Caco-2 (cell line): ENCODE measurements at regions of chr1 and their contacts with region 1.

Region 1: GRCh38 chr1:245045087-245045881 is 109.5 kb upstream of the KIF26B start:
- DNase-seq: peak; percentile 88 to 94
- H3K4me3 ChIP-seq: peak overlapping the region; percentile 13; the same call in 1 of the 2 replicates
- H3K4me3 Mint-ChIP-seq: peak overlapping the region; percentile 47
- H3K27ac Mint-ChIP-seq: peak overlapping the region; percentile 39
- H3K4me1 ChIP-seq: peaks cover 54% of the 10 kb centered on the region
- H3K4me1 Mint-ChIP-seq: peaks cover 37% of the 10 kb centered on the region
- H3K27me3 ChIP-seq: no peaks in the 10 kb centered on the region
- H3K27me3 Mint-ChIP-seq: no peaks in the 10 kb centered on the region
- CTCF ChIP-seq: no peak

Region 2: DNA sequence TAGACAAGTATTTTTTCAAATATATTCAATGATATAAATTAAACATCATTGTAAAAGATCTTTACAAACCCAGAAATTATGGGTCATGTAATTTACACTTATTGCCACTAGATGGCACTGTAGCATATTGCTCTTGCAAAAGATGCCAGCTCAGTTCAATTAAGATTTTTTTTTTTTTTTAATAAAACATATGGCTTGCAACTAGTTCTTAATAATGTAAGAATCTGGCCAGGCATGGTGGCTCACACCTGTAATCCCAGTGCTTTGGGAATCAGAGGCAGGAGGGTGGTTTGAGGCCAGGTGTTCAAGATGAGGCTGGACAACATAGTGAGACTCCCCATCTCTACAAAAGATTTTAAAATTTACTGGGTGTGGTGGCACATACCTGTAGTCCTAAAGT is 441.8 kb before region 1 on chr1:
- CTCF ChIA-PET with region 1: interaction called, 4 read pairs
- POLR2A ChIA-PET with region 1: no interaction called
- intact Hi-C with region 1: loop called (anchors 2 kb)
- DNase-seq: peak in 1 of 2 experiments; percentile 26
- H3K4me3 ChIP-seq: no peak overlapping the region
- H3K4me3 Mint-ChIP-seq: no peak overlapping the region
- H3K27ac Mint-ChIP-seq: no peak overlapping the region
- H3K4me1 ChIP-seq: no peaks in the 10 kb centered on the region
- H3K4me1 Mint-ChIP-seq: no peaks in the 10 kb centered on the region
- H3K27me3 ChIP-seq: no peaks in the 10 kb centered on the region
- H3K27me3 Mint-ChIP-seq: no peaks in the 10 kb centered on the region
- CTCF ChIP-seq: peak; percentile 60 to 81

Region 3: DNA sequence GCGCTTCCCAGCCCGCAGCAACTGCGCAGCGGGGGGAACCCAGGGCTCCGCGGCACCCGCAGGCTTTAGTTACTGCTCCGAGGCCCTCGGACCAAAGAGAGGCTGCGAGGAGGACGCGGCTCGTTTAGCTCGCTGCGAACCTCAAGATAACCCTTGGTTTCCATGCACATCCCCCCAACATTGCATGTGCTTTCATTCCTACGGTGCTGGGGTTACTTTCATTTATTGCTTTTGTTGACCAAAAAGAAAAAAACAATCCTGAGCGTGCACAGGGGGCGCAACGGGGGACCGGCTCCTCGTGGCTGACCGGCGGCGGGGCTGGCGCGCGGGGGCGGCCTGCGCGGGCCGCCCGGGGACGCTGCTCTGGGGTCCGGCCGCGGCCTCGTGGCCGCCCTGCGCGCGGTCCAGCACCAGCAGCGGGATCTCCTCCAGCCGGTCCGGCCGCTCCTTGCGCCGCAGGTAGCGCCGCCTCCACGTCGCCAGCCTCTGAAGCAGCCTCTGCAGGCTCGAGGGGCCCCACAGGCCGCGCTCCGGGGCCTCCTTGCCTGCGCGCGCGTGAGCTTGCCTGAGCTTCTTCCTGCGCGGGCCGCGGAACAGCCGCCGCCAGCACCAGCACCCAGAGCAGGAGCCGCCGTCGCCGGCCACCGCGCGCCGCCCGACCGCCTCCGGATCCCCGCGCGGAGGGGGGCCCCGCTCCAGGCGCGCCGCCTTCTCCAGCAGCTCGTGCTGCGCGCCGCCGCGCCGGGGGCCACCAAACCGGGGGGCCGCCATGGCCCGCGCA is 314.9 kb before region 1 on chr1:
- CTCF ChIA-PET with region 1: no interaction called
- POLR2A ChIA-PET with region 1: no interaction called
- intact Hi-C with region 1: loop called (anchors 10 kb)
- DNase-seq: peak; percentile 67 to 78
- H3K4me3 ChIP-seq: peak overlapping the region; percentile 63
- H3K4me3 Mint-ChIP-seq: peak overlapping the region; percentile 83
- H3K27ac Mint-ChIP-seq: peak overlapping the region; percentile 86
- H3K4me1 ChIP-seq: peaks cover 13% of the 10 kb centered on the region
- H3K4me1 Mint-ChIP-seq: peaks cover 7% of the 10 kb centered on the region
- H3K27me3 ChIP-seq: no peaks in the 10 kb centered on the region
- H3K27me3 Mint-ChIP-seq: no peaks in the 10 kb centered on the region
- CTCF ChIP-seq: no peak

Region 4: DNA sequence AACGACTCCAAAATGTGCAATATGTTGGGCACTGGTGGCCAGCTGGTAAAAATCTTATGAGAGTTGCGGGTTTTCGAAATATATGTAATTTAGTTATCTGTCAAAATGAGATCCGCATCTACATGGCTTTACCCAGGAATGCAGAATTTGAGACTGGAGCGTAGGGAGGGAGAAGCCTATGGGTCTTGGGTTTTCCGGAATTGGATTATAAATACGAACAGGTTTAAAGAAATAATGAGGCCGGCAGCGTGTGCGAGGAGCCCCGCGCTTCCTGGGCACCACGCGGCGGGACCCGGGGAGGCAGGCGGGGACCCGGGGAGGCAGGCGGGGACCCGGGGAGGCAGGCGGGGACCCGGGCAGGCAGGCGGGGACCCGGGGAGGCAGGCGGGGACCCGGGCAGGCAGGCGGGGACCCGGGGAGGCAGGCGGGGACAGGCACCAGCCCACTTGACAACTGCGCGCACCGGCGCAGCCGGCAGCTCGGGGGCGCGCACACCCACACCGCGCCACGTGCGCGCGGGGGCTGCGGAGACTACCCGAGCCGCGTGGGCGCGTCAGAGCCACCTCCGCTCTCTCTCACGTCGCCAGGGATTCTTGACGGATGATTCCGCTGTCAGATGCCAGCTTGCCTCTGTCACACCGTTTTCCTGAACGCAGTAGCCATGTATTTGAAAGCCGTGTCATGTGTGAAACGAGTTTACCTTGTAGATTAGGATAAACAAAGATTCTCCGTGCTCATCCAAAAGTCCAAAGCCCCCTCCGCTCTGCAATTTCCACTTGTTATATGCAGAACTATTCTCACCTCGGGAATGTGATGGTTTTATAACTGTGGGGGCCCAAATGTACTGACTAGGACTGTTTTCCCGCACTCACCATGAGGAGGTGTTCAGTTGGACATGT is 126.6 kb before region 1 on chr1:
- CTCF ChIA-PET with region 1: no interaction called
- POLR2A ChIA-PET with region 1: no interaction called
- intact Hi-C with region 1: loop called (anchors 1 kb)
- DNase-seq: peak; percentile 45 to 64
- H3K4me3 ChIP-seq: peak overlapping the region; percentile 82
- H3K4me3 Mint-ChIP-seq: peak overlapping the region; percentile 84
- H3K27ac Mint-ChIP-seq: peak overlapping the region; percentile 33
- H3K4me1 ChIP-seq: peaks cover 4% of the 10 kb centered on the region; the same call in 1 of the 2 replicates
- H3K4me1 Mint-ChIP-seq: peaks cover 6% of the 10 kb centered on the region
- H3K27me3 ChIP-seq: no peaks in the 10 kb centered on the region
- H3K27me3 Mint-ChIP-seq: no peaks in the 10 kb centered on the region
- CTCF ChIP-seq: no peak

Region 5: DNA sequence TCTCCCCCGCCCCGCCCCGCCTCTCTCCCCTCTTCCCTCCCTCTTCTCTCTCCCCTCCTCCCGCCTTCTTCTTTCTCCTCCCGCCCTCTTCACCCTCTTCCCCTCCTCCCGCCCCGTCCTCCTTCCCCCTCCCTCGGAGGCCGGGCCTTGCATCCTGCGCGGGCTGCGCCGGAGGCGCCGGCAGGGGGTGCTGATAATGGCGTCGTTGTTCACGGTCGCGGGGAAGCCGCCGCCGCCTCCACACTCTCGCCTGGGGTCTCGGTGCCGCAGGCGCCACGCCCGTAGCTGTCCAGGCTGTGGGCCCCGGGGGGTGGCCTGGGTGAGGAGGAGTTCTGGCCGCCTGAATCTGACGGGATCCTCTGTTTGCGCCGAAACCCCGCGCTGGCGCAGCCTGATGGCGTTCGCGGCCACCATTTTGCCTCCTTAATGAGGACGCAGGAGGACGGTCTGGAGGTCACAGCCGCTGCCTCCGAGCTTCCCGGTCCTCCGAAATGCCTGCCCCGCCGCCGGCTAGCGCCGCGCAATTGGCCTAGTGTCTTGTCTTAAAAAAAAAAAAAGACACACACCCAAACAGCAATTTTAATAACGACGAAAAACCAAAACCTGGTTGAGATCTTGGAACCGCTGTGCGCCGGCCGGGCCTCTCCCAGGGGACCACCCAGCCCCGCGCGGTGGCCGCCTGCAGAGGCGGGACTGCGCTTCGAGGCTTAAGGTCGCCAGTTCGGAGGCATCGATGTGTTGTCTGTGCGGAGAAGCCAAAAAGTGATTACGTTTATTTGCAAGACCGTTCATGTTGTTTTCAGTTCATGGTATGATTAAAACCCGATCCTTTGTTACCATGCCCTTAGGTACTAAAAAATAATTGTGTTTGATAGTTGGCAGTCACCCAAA is 74.4 kb before region 1 on chr1:
- CTCF ChIA-PET with region 1: interaction called, 7 read pairs
- POLR2A ChIA-PET with region 1: interaction called, 3 read pairs
- intact Hi-C with region 1: loop called (anchors 1 kb)
- DNase-seq: peak; percentile 97
- H3K4me3 ChIP-seq: peak overlapping the region; percentile 82
- H3K4me3 Mint-ChIP-seq: peak overlapping the region; percentile 91
- H3K27ac Mint-ChIP-seq: peak overlapping the region; percentile 99
- H3K4me1 ChIP-seq: peaks cover 16% of the 10 kb centered on the region
- H3K4me1 Mint-ChIP-seq: peaks cover 20% of the 10 kb centered on the region
- H3K27me3 ChIP-seq: no peaks in the 10 kb centered on the region
- H3K27me3 Mint-ChIP-seq: no peaks in the 10 kb centered on the region
- CTCF ChIP-seq: peak; percentile 54 to 79

Region 6: GRCh38 chr1:245008761-245009160 is 36.5 kb before region 1 on chr1:
- CTCF ChIA-PET with region 1: no interaction called
- POLR2A ChIA-PET with region 1: no interaction called
- intact Hi-C with region 1: no loop called
- DNase-seq: no peak
- H3K4me3 ChIP-seq: no peak overlapping the region
- H3K4me3 Mint-ChIP-seq: no peak overlapping the region
- H3K27ac Mint-ChIP-seq: no peak overlapping the region
- H3K4me1 ChIP-seq: no peaks in the 10 kb centered on the region
- H3K4me1 Mint-ChIP-seq: peaks cover 8% of the 10 kb centered on the region
- H3K27me3 ChIP-seq: no peaks in the 10 kb centered on the region
- H3K27me3 Mint-ChIP-seq: no peaks in the 10 kb centered on the region
- CTCF ChIP-seq: no peak

Region 7: DNA sequence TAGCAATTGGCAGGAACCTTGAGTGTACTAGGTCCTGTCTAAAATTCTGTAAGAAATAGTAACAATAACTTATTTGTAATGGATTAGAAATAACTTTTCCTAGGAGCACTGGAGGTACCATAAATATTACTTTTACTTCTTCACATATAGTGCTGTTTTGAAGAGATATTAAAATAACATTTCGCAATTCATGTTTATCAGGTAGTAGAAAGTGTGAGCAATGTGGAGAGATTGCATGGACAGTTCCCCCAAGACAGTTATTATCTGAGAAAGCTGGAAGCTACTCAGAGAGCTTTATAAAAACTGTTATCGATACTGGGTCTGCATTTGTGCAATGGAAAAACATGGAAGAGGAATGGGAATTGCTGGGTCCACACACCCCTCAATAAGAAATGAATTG is 19.0 kb before region 1 on chr1:
- CTCF ChIA-PET with region 1: no interaction called
- POLR2A ChIA-PET with region 1: no interaction called
- intact Hi-C with region 1: loop called (anchors 2 kb)
- DNase-seq: no peak
- H3K4me3 ChIP-seq: no peak overlapping the region
- H3K4me3 Mint-ChIP-seq: no peak overlapping the region
- H3K27ac Mint-ChIP-seq: no peak overlapping the region
- H3K4me1 ChIP-seq: peaks cover 23% of the 10 kb centered on the region
- H3K4me1 Mint-ChIP-seq: peaks cover 25% of the 10 kb centered on the region
- H3K27me3 ChIP-seq: no peaks in the 10 kb centered on the region
- H3K27me3 Mint-ChIP-seq: no peaks in the 10 kb centered on the region
- CTCF ChIP-seq: no peak

Region 8: DNA sequence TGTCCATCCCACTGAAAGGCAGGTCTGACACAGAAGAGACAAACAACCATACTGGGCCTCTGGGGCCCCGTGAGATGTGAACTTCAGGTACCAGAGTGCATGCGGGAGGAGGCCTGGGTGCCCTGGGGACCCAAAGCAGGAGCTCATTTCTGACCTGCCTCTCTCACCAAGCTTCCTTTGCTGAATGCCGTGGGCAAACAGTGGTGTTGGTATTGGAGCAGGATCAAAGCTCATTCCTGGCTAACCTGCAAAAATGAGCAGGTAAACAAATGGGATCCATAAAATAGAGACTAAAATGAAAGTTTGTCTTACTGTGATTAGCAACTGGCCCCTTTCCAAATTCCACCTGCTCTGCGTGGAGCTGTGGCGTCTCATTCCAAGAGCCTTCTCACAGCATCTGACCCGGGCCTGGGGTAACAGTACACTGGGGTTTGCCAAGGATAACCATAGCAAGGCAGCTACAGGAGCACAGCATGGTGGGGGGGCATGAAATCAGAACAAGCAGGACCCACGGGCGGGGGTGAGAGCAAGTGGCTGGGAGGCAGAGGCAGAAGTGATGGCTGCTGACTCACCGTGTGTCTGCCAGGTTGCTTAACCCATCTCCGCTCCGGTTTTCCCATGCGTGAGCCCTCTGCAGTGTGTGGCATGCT is 213.1 kb after region 1 on chr1:
- CTCF ChIA-PET with region 1: no interaction called
- POLR2A ChIA-PET with region 1: no interaction called
- intact Hi-C with region 1: no loop called
- DNase-seq: peak in 1 of 2 experiments; percentile 32
- H3K4me3 ChIP-seq: no peak overlapping the region
- H3K4me3 Mint-ChIP-seq: no peak overlapping the region
- H3K27ac Mint-ChIP-seq: peak overlapping the region; percentile 17
- H3K4me1 ChIP-seq: peaks cover 24% of the 10 kb centered on the region
- H3K4me1 Mint-ChIP-seq: peaks cover 20% of the 10 kb centered on the region
- H3K27me3 ChIP-seq: no peaks in the 10 kb centered on the region
- H3K27me3 Mint-ChIP-seq: no peaks in the 10 kb centered on the region
- CTCF ChIP-seq: no peak